Mucosa of descending colon (tissue), 3 donors: ENCODE measurements at regions of chr1 and their contacts with region 1.

Region 1: GRCh38 chr1:3618881-3619671 is 5.7 kb upstream of the TPRG1L start:
- DNase-seq: peak in 2 of 3 donors; percentile 56 to 91
- ATAC-seq: peak; percentile 91
- H3K4me3 ChIP-seq: no peak overlapping the region
- H3K4me1 ChIP-seq: peaks cover 16% of the 10 kb centered on the region
- CTCF ChIP-seq: peak; percentile 58

Region 2: GRCh38 chr1:3453203-3453761 is 165.8 kb before region 1 on chr1:
- intact Hi-C with region 1: loop called in 1 of 2 experiments (anchors 5 kb)
- DNase-seq: peak; percentile 81 to 93 (median 86)
- ATAC-seq: peak; percentile 69
- H3K4me3 ChIP-seq: no peak overlapping the region
- H3K4me1 ChIP-seq: peaks cover 41% of the 10 kb centered on the region
- CTCF ChIP-seq: peak; percentile 90

Region 3: DNA sequence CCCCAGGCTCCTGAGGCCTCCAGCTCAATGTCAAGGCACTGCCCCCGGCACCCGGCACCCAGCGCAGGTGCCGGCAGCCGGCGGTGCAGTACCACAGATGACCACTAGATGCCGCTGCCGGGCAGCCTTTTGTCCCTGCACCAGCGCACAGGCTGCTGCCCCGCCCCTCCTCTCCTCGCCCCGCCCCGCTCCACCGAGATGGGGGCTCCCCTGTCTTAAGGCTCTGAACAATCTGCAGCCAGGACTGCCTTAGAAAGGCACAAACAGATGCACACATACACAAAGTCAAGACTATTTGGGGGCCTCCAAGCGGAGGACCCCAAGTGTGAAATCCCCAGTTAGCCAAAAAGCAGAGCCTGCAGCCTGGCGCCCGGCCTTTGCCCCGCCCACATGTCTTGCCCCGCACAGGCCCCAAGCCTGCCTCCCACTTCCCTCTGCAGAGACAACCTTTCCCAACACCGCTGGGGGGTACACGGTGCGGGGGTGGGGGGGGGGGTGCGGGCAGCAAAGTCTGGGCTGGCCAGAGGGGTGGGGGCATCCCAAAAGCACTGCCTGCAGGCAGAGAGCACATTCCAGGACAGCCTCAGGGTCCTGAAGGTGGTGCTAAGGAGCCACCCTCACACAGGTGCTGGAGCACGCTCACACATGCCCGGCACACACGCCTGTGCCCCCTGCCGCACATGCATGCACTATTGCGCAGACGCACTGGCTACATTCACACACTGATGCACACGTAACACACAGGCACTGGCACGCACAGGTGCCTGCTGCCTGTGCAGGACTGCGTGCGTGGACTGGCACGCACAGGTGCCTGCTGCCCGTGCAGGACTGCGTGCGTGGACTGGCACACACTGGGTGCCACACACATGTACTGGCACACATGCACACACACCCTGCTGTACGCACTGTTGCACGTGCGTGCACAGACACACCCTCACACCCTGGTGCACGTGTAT is 127.5 kb before region 1 on chr1:
- intact Hi-C with region 1: loop called in 1 of 2 experiments (anchors 5 kb)
- DNase-seq: peak; percentile 78 to 88 (median 85)
- ATAC-seq: peak; percentile 94
- H3K4me3 ChIP-seq: no peak overlapping the region
- H3K4me1 ChIP-seq: peaks cover 2% of the 10 kb centered on the region
- CTCF ChIP-seq: peak; percentile 100